ENCODE measurements at regions of chr2 and their contacts with region 1.

Region 1: GRCh38 chr2:11778923-11779757 is 32.7 kb downstream of the LPIN1 start:
- DNase-seq: peak; percentile 79 to 84 (median 81)
- H3K4me3 ChIP-seq: peak overlapping the region in 1 of 2 donors; percentile 19
- H3K4me3 Mint-ChIP-seq: peak overlapping the region; percentile 59 to 84 (median 72)
- H3K27ac ChIP-seq: peak overlapping the region; percentile 52
- H3K27ac Mint-ChIP-seq: peak overlapping the region; percentile 64 to 90 (median 87)
- H3K4me1 ChIP-seq: peaks cover 34% of the 10 kb centered on the region
- H3K4me1 Mint-ChIP-seq: peaks cover 32 to 48% (median 39%) of the 10 kb centered on the region in 4 donors
- H3K27me3 ChIP-seq: no peaks in the 10 kb centered on the region
- H3K27me3 Mint-ChIP-seq: no peaks in the 10 kb centered on the region

Region 2: GRCh38 chr2:11477994-11478393 is 301.1 kb before region 1 on chr2:
- CTCF ChIA-PET with region 1: interaction called, 4 read pairs
- POLR2A ChIA-PET with region 1: no interaction called
- intact Hi-C with region 1: loop called (anchors 1 kb)
- DNase-seq: peak; percentile 57 to 71 (median 63)
- H3K4me3 ChIP-seq: no peak overlapping the region
- H3K4me3 Mint-ChIP-seq: no peak overlapping the region
- H3K27ac ChIP-seq: no peak overlapping the region
- H3K27ac Mint-ChIP-seq: no peak overlapping the region
- H3K4me1 ChIP-seq: peaks cover under 1% of the 10 kb centered on the region
- H3K4me1 Mint-ChIP-seq: peaks cover under 1 to 5% (median 1%) of the 10 kb centered on the region in 4 donors
- H3K27me3 ChIP-seq: no peaks in the 10 kb centered on the region
- H3K27me3 Mint-ChIP-seq: peaks cover 12 to 17% of the 10 kb centered on the region in 2 donors

Region 3: GRCh38 chr2:11688222-11689069 is 90.7 kb before region 1 on chr2:
- CTCF ChIA-PET with region 1: interaction called, 476 read pairs
- POLR2A ChIA-PET with region 1: interaction called, 6 read pairs
- intact Hi-C with region 1: loop called (anchors 1 kb)
- DNase-seq: peak; percentile 69 to 75 (median 74)
- H3K4me3 ChIP-seq: no peak overlapping the region
- H3K4me3 Mint-ChIP-seq: peak overlapping the region in 7 of 8 donors; percentile 14 to 69 (median 51)
- H3K27ac ChIP-seq: no peak overlapping the region
- H3K27ac Mint-ChIP-seq: peak overlapping the region in 4 of 7 donors; percentile 13 to 74 (median 18)
- H3K4me1 ChIP-seq: peaks cover 11% of the 10 kb centered on the region
- H3K4me1 Mint-ChIP-seq: peaks cover 5 to 10% (median 9%) of the 10 kb centered on the region in 4 donors
- H3K27me3 ChIP-seq: no peaks in the 10 kb centered on the region
- H3K27me3 Mint-ChIP-seq: peaks cover 3 to 8% of the 10 kb centered on the region in 2 donors

Region 4: GRCh38 chr2:11738589-11739436 is 40.3 kb before region 1 on chr2:
- CTCF ChIA-PET with region 1: interaction called, 258 read pairs
- POLR2A ChIA-PET with region 1: interaction called, 15 read pairs
- intact Hi-C with region 1: loop called (anchors 1 kb)
- DNase-seq: peak in 2 of 5 donors; percentile 31 to 49
- H3K4me3 ChIP-seq: no peak overlapping the region
- H3K4me3 Mint-ChIP-seq: no peak overlapping the region
- H3K27ac ChIP-seq: no peak overlapping the region
- H3K27ac Mint-ChIP-seq: peak overlapping the region in 1 of 7 donors; percentile 36
- H3K4me1 ChIP-seq: peaks cover 11% of the 10 kb centered on the region
- H3K4me1 Mint-ChIP-seq: peaks cover 3 to 20% (median 8%) of the 10 kb centered on the region in 4 donors
- H3K27me3 ChIP-seq: no peaks in the 10 kb centered on the region
- H3K27me3 Mint-ChIP-seq: peaks cover 0 to 3% of the 10 kb centered on the region in 2 donors

Region 5: DNA sequence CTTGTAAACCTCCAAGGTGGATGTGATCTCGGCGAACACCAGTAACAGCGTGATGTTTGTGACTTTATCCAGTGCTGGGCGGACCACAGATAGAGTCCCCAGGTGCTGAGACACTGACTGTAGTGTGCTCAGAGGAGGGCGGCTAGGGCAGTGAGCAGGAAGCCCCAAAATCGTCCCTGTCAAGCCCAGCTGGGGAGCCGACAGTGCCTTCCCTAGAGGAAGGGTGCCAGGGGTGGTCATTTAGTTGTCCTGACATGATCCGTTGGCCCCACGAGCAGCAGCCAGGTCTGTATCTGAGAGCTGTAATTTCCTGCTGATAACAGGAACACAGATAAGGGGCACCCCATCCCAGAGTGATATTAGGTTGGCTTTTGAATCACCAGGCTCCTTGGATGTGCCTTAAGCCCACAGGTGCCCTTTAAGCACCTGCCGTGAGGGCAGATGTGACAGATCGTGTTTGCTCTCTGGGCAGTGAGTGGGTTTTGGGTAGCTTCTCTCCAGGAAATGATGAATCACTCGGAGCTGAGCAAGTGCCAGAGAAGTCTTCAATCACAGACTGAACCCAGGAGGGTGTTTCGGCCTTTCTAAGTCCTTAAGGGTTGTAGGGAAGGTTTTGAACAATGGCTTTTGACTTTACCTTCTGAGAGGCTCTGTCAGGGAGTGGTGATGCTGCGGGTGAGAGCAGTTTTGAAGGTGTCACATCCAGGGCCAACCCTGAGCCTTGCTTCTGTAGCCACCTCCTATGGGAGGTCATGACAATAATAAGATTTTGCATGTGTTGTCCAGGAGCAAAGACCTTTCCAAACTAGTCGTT is 25.0 kb before region 1 on chr2:
- CTCF ChIA-PET with region 1: interaction called, 258 read pairs
- POLR2A ChIA-PET with region 1: interaction called, 21 read pairs
- intact Hi-C with region 1: loop called (anchors 1 kb)
- DNase-seq: peak; percentile 39 to 88 (median 44)
- H3K4me3 ChIP-seq: peak overlapping the region; percentile 19 to 43
- H3K4me3 Mint-ChIP-seq: peak overlapping the region; percentile 78 to 92 (median 84)
- H3K27ac ChIP-seq: peak overlapping the region; percentile 70
- H3K27ac Mint-ChIP-seq: peak overlapping the region; percentile 91 to 98 (median 95)
- H3K4me1 ChIP-seq: peaks cover 95% of the 10 kb centered on the region
- H3K4me1 Mint-ChIP-seq: peaks cover 60 to 93% (median 78%) of the 10 kb centered on the region in 4 donors
- H3K27me3 ChIP-seq: no peaks in the 10 kb centered on the region
- H3K27me3 Mint-ChIP-seq: no peaks in the 10 kb centered on the region

Measured in CD4-positive, alpha-beta memory T cell (primary cell).